ENCODE measurements at regions of chr1 and their contacts with region 1.

Region 1: DNA sequence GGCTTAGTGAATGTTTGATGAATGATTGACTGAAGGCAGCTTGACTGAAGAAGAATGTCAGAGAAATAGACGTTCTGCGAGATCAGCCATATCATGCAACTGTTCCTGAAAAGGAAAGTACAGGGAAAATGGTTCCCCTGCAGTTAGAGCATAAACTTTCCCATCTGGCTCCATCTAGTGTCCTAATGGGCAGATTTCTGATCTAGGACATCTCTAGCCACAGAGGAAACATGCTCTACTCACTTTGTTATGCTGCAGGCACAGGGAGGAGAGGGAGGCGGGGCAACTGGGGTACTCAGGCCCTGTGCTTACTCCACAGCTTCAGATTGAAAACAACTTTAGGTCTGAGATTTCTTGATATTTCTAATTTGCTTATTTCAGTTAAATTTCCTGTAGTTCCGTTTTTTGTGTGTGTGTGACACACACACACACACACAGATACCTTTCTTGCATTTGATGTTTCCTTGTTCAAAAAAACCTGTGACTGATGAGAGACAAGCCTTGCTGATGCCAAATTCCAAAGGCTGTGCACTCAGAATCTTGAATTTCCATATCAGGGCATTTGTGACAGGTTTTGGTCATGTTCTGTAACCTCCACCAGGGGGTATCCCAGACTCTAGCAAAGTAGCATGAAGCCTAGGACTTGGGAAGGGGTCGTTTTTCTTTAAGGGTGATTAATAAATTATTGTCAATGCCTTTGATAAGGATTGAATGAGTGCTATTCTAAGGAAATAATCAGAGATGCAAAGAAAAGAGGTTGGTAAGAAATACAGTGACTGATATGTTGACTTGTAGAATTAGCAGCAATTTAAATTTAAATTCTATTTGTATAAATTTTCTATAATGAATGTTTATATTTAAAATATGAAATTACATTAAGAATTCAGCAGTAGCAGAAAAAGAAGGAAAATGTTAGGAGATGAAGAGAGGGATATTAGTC is 139.7 kb upstream of the BEND5 start:
- DNase-seq: peak; percentile 61
- H3K4me3 ChIP-seq: no peak overlapping the region
- H3K27ac ChIP-seq: no peak overlapping the region
- H3K4me1 ChIP-seq: no peaks in the 10 kb centered on the region
- H3K27me3 ChIP-seq: no peaks in the 10 kb centered on the region
- CTCF ChIP-seq: peak; percentile 63 to 69

Region 2: GRCh38 chr1:48572646-48573261 is 343.6 kb before region 1 on chr1:
- CTCF ChIA-PET with region 1: interaction called, 4 read pairs
- dilution Hi-C with region 1: no loop called
- in situ Hi-C with region 1: loop called in 1 of 2 experiments (anchors 25 kb)
- intact Hi-C with region 1: loop called (anchors 2 kb)
- DNase-seq: peak; percentile 49
- H3K4me3 ChIP-seq: no peak overlapping the region
- H3K27ac ChIP-seq: no peak overlapping the region
- H3K4me1 ChIP-seq: peaks cover 12% of the 10 kb centered on the region
- H3K27me3 ChIP-seq: no peaks in the 10 kb centered on the region
- CTCF ChIP-seq: peak; percentile 85 to 88

Region 3: DNA sequence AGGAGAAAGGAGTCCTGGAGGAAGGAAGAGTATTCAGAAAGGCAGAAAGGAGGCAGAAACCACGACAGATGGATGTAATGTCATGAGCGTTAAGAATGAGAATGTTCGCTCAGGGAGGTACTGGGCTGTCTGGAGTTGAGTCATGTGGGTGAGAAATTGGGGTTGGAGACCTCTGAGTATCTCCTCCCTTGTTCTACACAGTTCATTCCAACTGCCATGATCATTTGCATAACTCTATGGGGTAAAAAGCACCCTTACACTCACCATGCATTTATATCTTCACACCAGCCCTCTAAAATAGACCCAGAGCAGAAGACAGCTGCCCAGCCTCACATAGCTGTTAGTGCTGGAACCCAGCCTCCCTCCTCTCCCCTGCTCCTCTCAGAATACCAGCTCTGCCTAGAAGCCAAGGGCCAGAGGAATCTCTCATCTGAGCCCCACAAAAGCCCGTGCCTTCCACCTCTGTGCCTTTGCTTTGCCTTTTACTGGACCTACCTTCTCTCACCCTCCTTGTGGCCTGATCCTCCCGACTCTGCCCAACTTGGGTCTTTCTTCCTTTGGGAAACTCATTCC is 224.9 kb before region 1 on chr1:
- CTCF ChIA-PET with region 1: no interaction called
- dilution Hi-C with region 1: no loop called
- in situ Hi-C with region 1: no loop called
- intact Hi-C with region 1: loop called (anchors 5 kb)
- DNase-seq: no peak
- H3K4me3 ChIP-seq: no peak overlapping the region
- H3K27ac ChIP-seq: no peak overlapping the region
- H3K4me1 ChIP-seq: peaks cover 35% of the 10 kb centered on the region
- H3K27me3 ChIP-seq: no peaks in the 10 kb centered on the region
- CTCF ChIP-seq: no peak

Region 4: GRCh38 chr1:48870596-48870995 is 45.8 kb before region 1 on chr1:
- CTCF ChIA-PET with region 1: no interaction called
- dilution Hi-C with region 1: no loop called
- in situ Hi-C with region 1: no loop called
- intact Hi-C with region 1: loop called (anchors 2 kb)
- DNase-seq: no peak
- H3K4me3 ChIP-seq: no peak overlapping the region
- H3K27ac ChIP-seq: no peak overlapping the region
- H3K4me1 ChIP-seq: peaks cover 24% of the 10 kb centered on the region
- H3K27me3 ChIP-seq: no peaks in the 10 kb centered on the region
- CTCF ChIP-seq: peak; percentile 73 to 74

Region 5: DNA sequence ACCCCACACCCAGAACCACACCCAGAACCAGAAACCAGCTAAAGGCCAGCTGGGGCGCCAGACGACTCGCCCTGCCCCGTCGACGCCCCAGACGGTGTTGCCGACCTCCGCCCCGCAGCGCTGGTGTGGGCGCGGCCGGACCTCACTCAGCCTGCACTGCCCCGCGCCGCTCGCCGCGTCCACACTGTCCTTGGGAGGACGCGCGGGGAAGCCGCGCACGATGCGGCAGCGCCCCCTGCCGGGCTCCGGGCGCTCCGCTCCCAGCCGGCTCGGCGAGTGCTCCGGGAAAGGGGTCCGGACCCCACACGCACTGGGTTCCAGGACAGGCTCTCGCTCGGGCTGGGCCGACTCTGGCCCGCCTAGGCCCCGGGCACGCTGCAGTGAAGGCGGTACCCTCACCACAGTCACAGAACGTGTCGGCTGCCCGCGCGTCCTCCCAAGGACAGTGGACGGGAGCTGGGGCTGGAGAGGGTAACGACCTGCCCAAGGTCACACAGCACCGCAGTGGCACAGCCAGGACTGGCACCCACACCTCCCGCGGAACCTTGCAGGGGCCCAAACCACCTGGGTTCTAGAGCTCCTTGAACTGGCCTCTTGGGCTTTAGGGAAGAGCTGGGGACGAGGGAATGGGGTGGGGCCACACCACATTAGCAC is 1416.7 kb after region 1 on chr1:
- CTCF ChIA-PET with region 1: no interaction called
- dilution Hi-C with region 1: no loop called
- in situ Hi-C with region 1: no loop called
- intact Hi-C with region 1: loop called (anchors 2 kb)
- DNase-seq: peak; percentile 20
- H3K4me3 ChIP-seq: peak overlapping the region; percentile 18 to 49 (median 45)
- H3K27ac ChIP-seq: no peak overlapping the region
- H3K4me1 ChIP-seq: peaks cover 8% of the 10 kb centered on the region
- H3K27me3 ChIP-seq: no peaks in the 10 kb centered on the region
- CTCF ChIP-seq: peak; percentile 59 to 81